H1 (cell line): ENCODE measurements at regions of chr4 and their contacts with region 1.

Region 1: GRCh38 chr4:183261953-183262775 is 57.9 kb downstream of the CLDN22 start:
- DNase-seq: peak; percentile 38 to 89
- H3K4me3 ChIP-seq: no peak overlapping the region
- H3K27ac ChIP-seq: no peak overlapping the region
- H3K4me1 ChIP-seq: peaks cover 0 to 11% (median 2%) of the 10 kb centered on the region in 4 experiments; a peak in 3 of 7 replicates
- H3K27me3 ChIP-seq: no peaks in the 10 kb centered on the region
- CTCF ChIP-seq: peak; percentile 64 to 90 (median 86)
- EP300 ChIP-seq: no peak
- POLR2A ChIP-seq: no peak
- RAD21 ChIP-seq: peak; percentile 88 to 93

Region 2: GRCh38 chr4:182994171-182994570 is 268.0 kb before region 1 on chr4:
- CTCF ChIA-PET with region 1: interaction called, 10 read pairs
- POLR2A ChIA-PET with region 1: no interaction called
- DNase-seq: no peak
- H3K4me3 ChIP-seq: no peak overlapping the region
- H3K27ac ChIP-seq: no peak overlapping the region
- H3K4me1 ChIP-seq: no peaks in the 10 kb centered on the region
- H3K27me3 ChIP-seq: no peaks in the 10 kb centered on the region
- CTCF ChIP-seq: no peak
- EP300 ChIP-seq: no peak
- POLR2A ChIP-seq: no peak
- RAD21 ChIP-seq: no peak

Region 3: GRCh38 chr4:183030309-183030708 is 231.9 kb before region 1 on chr4:
- CTCF ChIA-PET with region 1: interaction called, 12 read pairs
- POLR2A ChIA-PET with region 1: no interaction called
- DNase-seq: no peak
- H3K4me3 ChIP-seq: no peak overlapping the region
- H3K27ac ChIP-seq: no peak overlapping the region
- H3K4me1 ChIP-seq: no peaks in the 10 kb centered on the region
- H3K27me3 ChIP-seq: no peaks in the 10 kb centered on the region
- CTCF ChIP-seq: no peak
- EP300 ChIP-seq: no peak
- POLR2A ChIP-seq: no peak
- RAD21 ChIP-seq: no peak

Region 4: DNA sequence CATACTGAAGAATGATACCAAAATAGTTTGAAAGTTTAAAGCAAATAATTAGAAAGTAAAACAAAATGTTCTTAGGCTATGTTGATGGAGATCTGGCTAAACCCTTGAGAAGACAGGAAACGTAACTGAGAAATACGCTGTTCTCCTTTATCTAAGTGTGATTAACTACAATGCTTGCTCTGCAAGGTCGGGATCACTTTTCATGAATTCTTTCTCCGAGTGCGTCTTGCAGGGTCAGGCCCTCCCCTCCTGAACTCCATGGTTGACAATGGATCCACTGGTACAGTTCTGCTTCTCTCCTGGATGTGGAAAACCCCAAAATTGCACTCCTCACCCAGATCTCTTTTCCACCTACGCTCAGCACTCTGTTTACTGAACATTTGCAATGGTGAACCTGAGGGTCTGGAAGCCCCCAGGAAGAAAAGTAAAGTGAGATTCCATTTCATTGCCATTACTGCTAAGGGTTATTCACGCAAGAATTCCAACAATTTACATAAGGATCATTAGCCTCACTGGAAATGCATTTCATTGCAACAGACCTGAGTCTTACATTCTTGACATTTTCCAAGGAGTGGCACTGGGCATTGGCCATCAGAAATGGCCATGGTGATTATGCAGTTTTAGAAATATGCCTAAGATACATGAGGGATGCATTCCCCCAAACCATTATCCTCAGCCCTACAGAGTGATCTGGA is 187.7 kb before region 1 on chr4:
- CTCF ChIA-PET with region 1: interaction called, 113 read pairs
- POLR2A ChIA-PET with region 1: interaction called, 4 read pairs
- DNase-seq: no peak
- H3K4me3 ChIP-seq: peak overlapping the region in 1 of 4 experiments; percentile 7; a peak in 1 of 8 replicates
- H3K27ac ChIP-seq: no peak overlapping the region
- H3K4me1 ChIP-seq: peaks cover 3 to 14% (median 7%) of the 10 kb centered on the region in 4 experiments; a peak in 5 of 7 replicates
- H3K27me3 ChIP-seq: no peaks in the 10 kb centered on the region
- CTCF ChIP-seq: no peak
- EP300 ChIP-seq: no peak
- POLR2A ChIP-seq: no peak
- RAD21 ChIP-seq: no peak

Region 5: DNA sequence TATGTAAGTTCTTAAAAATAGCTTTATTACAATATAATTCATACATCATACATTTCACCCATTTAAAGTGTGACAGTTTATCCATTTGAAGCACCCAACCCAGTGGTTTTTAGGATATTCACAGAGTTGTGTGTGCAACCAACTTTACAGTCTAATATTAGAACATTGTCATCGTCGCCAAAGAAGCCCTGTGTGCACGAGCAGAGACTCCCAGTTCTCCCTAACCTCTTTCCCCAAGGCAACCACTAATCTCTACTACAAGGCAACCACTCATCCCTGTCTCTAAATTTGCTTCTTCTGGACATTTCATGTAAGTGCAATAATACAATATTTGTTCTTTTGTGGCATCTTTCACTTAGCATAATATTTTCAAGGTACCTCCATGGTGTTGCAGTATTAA is 10.2 kb after region 1 on chr4:
- CTCF ChIA-PET with region 1: interaction called, 12 read pairs
- POLR2A ChIA-PET with region 1: no interaction called
- DNase-seq: no peak
- H3K4me3 ChIP-seq: no peak overlapping the region
- H3K27ac ChIP-seq: no peak overlapping the region
- H3K4me1 ChIP-seq: no peaks in the 10 kb centered on the region
- H3K27me3 ChIP-seq: no peaks in the 10 kb centered on the region
- CTCF ChIP-seq: no peak
- EP300 ChIP-seq: no peak
- POLR2A ChIP-seq: no peak
- RAD21 ChIP-seq: no peak

Region 6: DNA sequence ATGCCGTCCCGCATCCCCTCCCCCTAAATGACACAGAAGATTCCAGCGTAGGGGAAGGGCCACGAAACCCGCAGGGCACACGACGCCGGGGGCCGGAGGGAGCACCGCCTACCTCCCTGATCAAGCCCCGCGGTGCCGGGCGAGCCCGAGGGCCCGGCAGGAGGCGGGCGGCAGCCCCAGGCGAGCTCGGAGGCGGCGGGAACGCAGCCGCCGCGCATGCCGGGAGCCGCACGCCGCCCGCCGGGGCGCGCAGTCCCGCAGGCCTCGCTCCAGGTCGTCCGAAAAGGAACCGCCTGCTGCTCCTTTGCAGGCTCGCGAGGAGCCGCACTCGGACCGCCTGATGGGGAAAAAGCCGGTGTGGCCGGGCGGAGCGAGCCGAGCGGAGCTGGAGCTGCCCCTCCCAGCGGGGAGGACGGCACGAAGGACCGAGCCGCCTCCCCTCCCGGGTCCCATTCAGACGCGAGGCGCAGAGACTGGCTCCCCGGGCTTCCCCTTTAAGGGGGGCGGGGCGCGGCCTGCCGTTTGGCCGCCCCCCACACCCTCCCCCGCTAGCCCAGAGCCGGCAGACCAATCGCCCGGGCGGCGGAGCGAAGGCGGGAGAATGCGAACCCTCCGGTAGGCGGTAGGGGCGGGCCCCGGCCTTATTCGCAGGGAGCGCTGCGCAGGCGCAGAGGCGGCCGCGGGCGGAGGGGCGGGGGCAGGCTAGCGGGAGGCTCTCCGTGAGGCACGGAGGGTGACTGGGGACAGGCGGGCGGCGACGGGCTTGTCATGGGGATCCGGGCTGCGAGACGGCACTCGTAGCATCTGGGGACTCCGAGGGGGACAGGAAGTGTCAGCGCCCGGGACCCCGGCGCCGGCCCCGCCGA is 242.1 kb after region 1 on chr4:
- CTCF ChIA-PET with region 1: no interaction called
- POLR2A ChIA-PET with region 1: no interaction called
- DNase-seq: peak; percentile 91 to 99
- H3K4me3 ChIP-seq: peak overlapping the region; percentile 73 to 100 (median 90)
- H3K27ac ChIP-seq: peak overlapping the region; percentile 95
- H3K4me1 ChIP-seq: peaks cover 0 to 5% (median 1%) of the 10 kb centered on the region in 4 experiments; a peak in 2 of 7 replicates
- H3K27me3 ChIP-seq: no peaks in the 10 kb centered on the region
- CTCF ChIP-seq: peak in 1 of 3 experiments; percentile 1; a peak in 1 of 4 replicates
- EP300 ChIP-seq: 0 out of 3 replicates have a peak, but pooled peaks of 1 of the 2 experiments have one; percentile 48
- POLR2A ChIP-seq: peak; percentile 77 to 83
- RAD21 ChIP-seq: peak; percentile 7 to 37; a peak in 3 of 4 replicates